ENCODE measurements at regions of chr17 and their contacts with region 1.

Region 1: DNA sequence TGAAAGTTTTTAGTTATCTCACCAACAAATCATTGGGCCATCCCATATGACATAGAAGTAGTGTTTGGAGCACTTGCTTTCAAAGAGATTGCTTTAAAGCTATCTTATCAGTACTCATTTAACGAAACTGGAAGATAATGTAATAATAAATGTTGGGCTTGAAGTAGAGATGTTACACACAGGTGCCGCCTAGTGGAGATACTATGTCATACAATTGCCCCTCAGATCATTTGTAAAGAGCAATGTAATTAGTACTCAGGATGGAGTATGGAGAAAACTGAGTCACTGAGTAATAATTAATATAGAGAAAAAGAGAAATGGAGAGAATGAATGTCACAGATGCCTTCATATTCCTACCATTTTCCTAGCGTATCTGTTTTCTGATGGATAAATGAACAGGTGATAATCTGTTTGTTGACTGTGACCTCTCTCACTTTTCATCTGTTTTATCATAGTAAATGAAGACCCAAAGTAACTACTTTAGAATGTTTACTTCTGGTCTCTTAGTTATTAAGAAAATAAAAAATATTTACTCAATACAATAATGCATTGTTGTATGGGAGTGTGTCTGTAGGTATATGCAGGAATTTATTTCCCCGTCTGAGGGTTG is 80.4 kb downstream of the EFCAB5 start:
- DNase-seq: peak in 6 of 9 donors; percentile 33 to 61 (median 48)
- ATAC-seq: peak; percentile 84
- H3K4me3 ChIP-seq: no peak overlapping the region
- H3K4me3 Mint-ChIP-seq: no peak overlapping the region
- H3K27ac ChIP-seq: no peak overlapping the region
- H3K27ac Mint-ChIP-seq: no peak overlapping the region
- H3K4me1 ChIP-seq: no peaks in the 10 kb centered on the region
- H3K4me1 Mint-ChIP-seq: peaks cover 0 to 2% (median 0%) of the 10 kb centered on the region in 7 donors
- H3K27me3 ChIP-seq: no peaks in the 10 kb centered on the region
- H3K27me3 Mint-ChIP-seq: peaks cover 0 to 16% (median 5%) of the 10 kb centered on the region in 5 donors

Region 2: GRCh38 chr17:29292992-29293889 is 728.6 kb before region 1 on chr17:
- CTCF ChIA-PET with region 1: no interaction called
- POLR2A ChIA-PET with region 1: no interaction called
- intact Hi-C with region 1: no loop called
- DNase-seq: peak; percentile 30 to 72 (median 48)
- ATAC-seq: peak; percentile 29
- H3K4me3 ChIP-seq: peak overlapping the region; percentile 98
- H3K4me3 Mint-ChIP-seq: peak overlapping the region; percentile 99 to 100 (median 100)
- H3K27ac ChIP-seq: peak overlapping the region; percentile 90
- H3K27ac Mint-ChIP-seq: peak overlapping the region; percentile 97 to 100 (median 99)
- H3K4me1 ChIP-seq: peaks cover 36 to 44% of the 10 kb centered on the region in 2 donors
- H3K4me1 Mint-ChIP-seq: peaks cover 30 to 53% (median 49%) of the 10 kb centered on the region in 7 donors
- H3K27me3 ChIP-seq: no peaks in the 10 kb centered on the region
- H3K27me3 Mint-ChIP-seq: peaks cover 0 to 4% (median 0%) of the 10 kb centered on the region in 5 donors

Region 3: GRCh38 chr17:29579866-29580771 is 441.7 kb before region 1 on chr17:
- CTCF ChIA-PET with region 1: no interaction called
- POLR2A ChIA-PET with region 1: no interaction called
- intact Hi-C with region 1: loop called in 1 of 2 experiments (anchors 1 kb)
- DNase-seq: peak; percentile 79 to 90 (median 87)
- ATAC-seq: peak; percentile 99
- H3K4me3 ChIP-seq: no peak overlapping the region
- H3K4me3 Mint-ChIP-seq: peak overlapping the region in 2 of 10 donors; percentile 2 to 32
- H3K27ac ChIP-seq: peak overlapping the region; percentile 53
- H3K27ac Mint-ChIP-seq: peak overlapping the region; percentile 7 to 96 (median 81)
- H3K4me1 ChIP-seq: peaks cover 2 to 17% of the 10 kb centered on the region in 2 donors
- H3K4me1 Mint-ChIP-seq: peaks cover 21 to 24% (median 22%) of the 10 kb centered on the region in 7 donors
- H3K27me3 ChIP-seq: no peaks in the 10 kb centered on the region
- H3K27me3 Mint-ChIP-seq: no peaks in the 10 kb centered on the region

Region 4: GRCh38 chr17:29640413-29640812 is 381.4 kb before region 1 on chr17:
- CTCF ChIA-PET with region 1: interaction called, 5 read pairs
- POLR2A ChIA-PET with region 1: no interaction called
- intact Hi-C with region 1: loop called (anchors 1 to 5 kb)
- DNase-seq: no peak
- ATAC-seq: no peak
- H3K4me3 ChIP-seq: no peak overlapping the region
- H3K4me3 Mint-ChIP-seq: no peak overlapping the region
- H3K27ac ChIP-seq: no peak overlapping the region
- H3K27ac Mint-ChIP-seq: peak overlapping the region in 8 of 9 donors; percentile 40 to 88 (median 61)
- H3K4me1 ChIP-seq: no peaks in the 10 kb centered on the region
- H3K4me1 Mint-ChIP-seq: peaks cover 0 to 35% (median 19%) of the 10 kb centered on the region in 7 donors
- H3K27me3 ChIP-seq: no peaks in the 10 kb centered on the region
- H3K27me3 Mint-ChIP-seq: no peaks in the 10 kb centered on the region

Region 5: GRCh38 chr17:29710891-29711418 is 310.9 kb before region 1 on chr17:
- CTCF ChIA-PET with region 1: no interaction called
- POLR2A ChIA-PET with region 1: no interaction called
- intact Hi-C with region 1: no loop called
- DNase-seq: no peak
- ATAC-seq: no peak
- H3K4me3 ChIP-seq: no peak overlapping the region
- H3K4me3 Mint-ChIP-seq: peak overlapping the region in 1 of 10 donors; percentile 24
- H3K27ac ChIP-seq: no peak overlapping the region
- H3K27ac Mint-ChIP-seq: peak overlapping the region in 8 of 9 donors; percentile 69 to 96 (median 86)
- H3K4me1 ChIP-seq: peaks cover 29 to 30% of the 10 kb centered on the region in 2 donors
- H3K4me1 Mint-ChIP-seq: peaks cover 37 to 92% (median 75%) of the 10 kb centered on the region in 7 donors
- H3K27me3 ChIP-seq: no peaks in the 10 kb centered on the region
- H3K27me3 Mint-ChIP-seq: no peaks in the 10 kb centered on the region

Region 6: GRCh38 chr17:29807520-29808351 is 214.1 kb before region 1 on chr17:
- CTCF ChIA-PET with region 1: interaction called, 6 read pairs
- POLR2A ChIA-PET with region 1: interaction called, 4 read pairs
- intact Hi-C with region 1: loop called (anchors 1 kb)
- DNase-seq: peak; percentile 26 to 75 (median 64)
- ATAC-seq: peak; percentile 93
- H3K4me3 ChIP-seq: no peak overlapping the region
- H3K4me3 Mint-ChIP-seq: peak overlapping the region in 3 of 10 donors; percentile 1 to 56 (median 30)
- H3K27ac ChIP-seq: no peak overlapping the region
- H3K27ac Mint-ChIP-seq: peak overlapping the region in 4 of 9 donors; percentile 6 to 43 (median 38)
- H3K4me1 ChIP-seq: peaks cover 0 to 10% of the 10 kb centered on the region in 2 donors
- H3K4me1 Mint-ChIP-seq: peaks cover 13 to 36% (median 25%) of the 10 kb centered on the region in 7 donors
- H3K27me3 ChIP-seq: no peaks in the 10 kb centered on the region
- H3K27me3 Mint-ChIP-seq: no peaks in the 10 kb centered on the region

Region 7: DNA sequence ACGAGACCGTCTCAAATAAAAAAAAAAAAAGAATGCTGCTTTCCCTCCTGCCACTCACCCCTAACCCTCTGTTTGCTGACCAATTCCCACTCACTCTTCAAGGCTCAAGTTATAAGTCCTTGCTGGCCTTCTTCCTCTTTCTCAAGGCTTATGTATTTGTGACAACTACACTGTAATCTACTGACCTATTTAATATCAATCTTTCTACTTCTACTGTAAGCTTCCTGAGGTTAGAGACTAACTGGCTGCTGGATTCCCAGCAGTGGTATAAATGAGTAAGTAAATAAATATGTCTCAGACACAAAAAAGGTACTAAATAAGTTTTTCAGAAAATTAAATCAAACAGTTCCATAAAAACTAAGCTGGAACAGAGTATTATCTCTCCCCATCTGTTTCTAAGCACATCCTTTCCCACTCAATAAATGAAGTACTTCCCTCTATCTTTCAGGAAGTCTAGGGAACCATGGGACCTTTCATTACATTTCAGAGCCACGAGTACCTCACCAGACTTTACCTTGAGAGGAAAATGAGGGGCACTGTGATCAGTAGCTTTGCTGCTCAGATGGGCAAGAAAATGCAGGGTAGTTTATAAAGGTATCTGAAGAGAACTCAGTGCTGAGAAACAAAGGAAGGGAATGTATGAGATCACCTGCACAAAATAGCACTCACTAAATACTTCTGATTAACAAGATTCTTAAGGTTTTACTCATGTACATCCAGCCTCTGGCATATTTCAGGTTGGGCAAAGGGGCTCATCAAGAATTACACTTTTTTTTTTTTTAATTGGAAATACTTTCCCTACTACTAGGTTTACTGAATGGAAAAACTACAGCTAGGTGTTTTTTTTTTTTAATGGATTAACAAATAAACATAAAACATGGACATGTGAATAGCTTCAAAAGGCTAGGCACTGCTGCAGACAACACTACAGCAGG is 102.6 kb before region 1 on chr17:
- CTCF ChIA-PET with region 1: no interaction called
- POLR2A ChIA-PET with region 1: no interaction called
- intact Hi-C with region 1: no loop called
- DNase-seq: no peak
- ATAC-seq: no peak
- H3K4me3 ChIP-seq: no peak overlapping the region
- H3K4me3 Mint-ChIP-seq: no peak overlapping the region
- H3K27ac ChIP-seq: no peak overlapping the region
- H3K27ac Mint-ChIP-seq: peak overlapping the region in 4 of 9 donors; percentile 34 to 66 (median 41)
- H3K4me1 ChIP-seq: no peaks in the 10 kb centered on the region
- H3K4me1 Mint-ChIP-seq: peaks cover 17 to 40% (median 26%) of the 10 kb centered on the region in 7 donors
- H3K27me3 ChIP-seq: no peaks in the 10 kb centered on the region
- H3K27me3 Mint-ChIP-seq: no peaks in the 10 kb centered on the region

Region 8: GRCh38 chr17:30093463-30094147 is 71.8 kb after region 1 on chr17:
- CTCF ChIA-PET with region 1: no interaction called
- POLR2A ChIA-PET with region 1: no interaction called
- intact Hi-C with region 1: loop called (anchors 1 kb)
- DNase-seq: peak; percentile 13 to 71 (median 40)
- ATAC-seq: peak; percentile 78
- H3K4me3 ChIP-seq: no peak overlapping the region
- H3K4me3 Mint-ChIP-seq: peak overlapping the region in 1 of 10 donors; percentile 11
- H3K27ac ChIP-seq: no peak overlapping the region
- H3K27ac Mint-ChIP-seq: no peak overlapping the region
- H3K4me1 ChIP-seq: no peaks in the 10 kb centered on the region
- H3K4me1 Mint-ChIP-seq: peaks cover 0 to 8% (median 5%) of the 10 kb centered on the region in 7 donors
- H3K27me3 ChIP-seq: no peaks in the 10 kb centered on the region
- H3K27me3 Mint-ChIP-seq: peaks cover 21 to 56% (median 33%) of the 10 kb centered on the region in 5 donors